WTC11 (cell line): ENCODE measurements at regions of chr17 and their contacts with region 1.

Region 1: GRCh38 chr17:10618202-10618635 is 38.9 kb downstream of the MYH3 start:
- DNase-seq: peak; percentile 80
- ATAC-seq: peak; percentile 91
- H3K4me3 Mint-ChIP-seq: no peak overlapping the region
- H3K27ac Mint-ChIP-seq: no peak overlapping the region
- H3K4me1 Mint-ChIP-seq: peaks cover 14% of the 10 kb centered on the region
- H3K27me3 Mint-ChIP-seq: no peaks in the 10 kb centered on the region
- CTCF ChIP-seq: peak; percentile 78

Region 2: GRCh38 chr17:10309003-10309834 is 309.0 kb before region 1 on chr17:
- CTCF ChIA-PET with region 1: interaction called, 12 read pairs
- POLR2A ChIA-PET with region 1: no interaction called
- DNase-seq: no peak
- ATAC-seq: no peak
- H3K4me3 Mint-ChIP-seq: no peak overlapping the region
- H3K27ac Mint-ChIP-seq: no peak overlapping the region
- H3K4me1 Mint-ChIP-seq: peaks cover 25% of the 10 kb centered on the region
- H3K27me3 Mint-ChIP-seq: peaks cover 8% of the 10 kb centered on the region
- CTCF ChIP-seq: no peak

Region 3: GRCh38 chr17:10337976-10338375 is 280.2 kb before region 1 on chr17:
- CTCF ChIA-PET with region 1: interaction called, 23 read pairs
- POLR2A ChIA-PET with region 1: no interaction called
- DNase-seq: no peak
- ATAC-seq: no peak
- H3K4me3 Mint-ChIP-seq: no peak overlapping the region
- H3K27ac Mint-ChIP-seq: no peak overlapping the region
- H3K4me1 Mint-ChIP-seq: peaks cover 19% of the 10 kb centered on the region
- H3K27me3 Mint-ChIP-seq: no peaks in the 10 kb centered on the region; the same call in 1 of the 2 replicates
- CTCF ChIP-seq: no peak

Region 4: DNA sequence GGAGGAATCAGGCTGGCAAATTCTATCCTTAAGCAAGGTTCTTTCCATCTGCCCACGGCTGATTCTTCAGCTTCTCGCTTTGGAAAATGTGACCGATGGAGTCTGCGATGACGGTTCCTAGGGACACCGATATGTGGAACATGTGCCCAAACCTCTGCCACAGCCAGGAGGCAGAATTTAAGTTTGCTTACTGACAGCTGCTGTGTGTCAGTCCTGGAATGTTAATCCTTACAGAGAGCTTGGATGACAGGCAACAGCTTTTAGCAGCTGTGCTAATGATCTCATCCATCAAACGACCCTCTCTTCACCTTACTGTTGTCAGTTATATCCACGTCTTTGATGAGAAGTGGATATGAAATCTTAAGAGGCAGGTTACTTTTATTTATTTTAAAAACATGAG is 234.0 kb before region 1 on chr17:
- CTCF ChIA-PET with region 1: interaction called, 12 read pairs
- POLR2A ChIA-PET with region 1: no interaction called
- DNase-seq: no peak
- ATAC-seq: no peak
- H3K4me3 Mint-ChIP-seq: no peak overlapping the region
- H3K27ac Mint-ChIP-seq: no peak overlapping the region
- H3K4me1 Mint-ChIP-seq: peaks cover 21% of the 10 kb centered on the region
- H3K27me3 Mint-ChIP-seq: no peaks in the 10 kb centered on the region
- CTCF ChIP-seq: no peak

Region 5: DNA sequence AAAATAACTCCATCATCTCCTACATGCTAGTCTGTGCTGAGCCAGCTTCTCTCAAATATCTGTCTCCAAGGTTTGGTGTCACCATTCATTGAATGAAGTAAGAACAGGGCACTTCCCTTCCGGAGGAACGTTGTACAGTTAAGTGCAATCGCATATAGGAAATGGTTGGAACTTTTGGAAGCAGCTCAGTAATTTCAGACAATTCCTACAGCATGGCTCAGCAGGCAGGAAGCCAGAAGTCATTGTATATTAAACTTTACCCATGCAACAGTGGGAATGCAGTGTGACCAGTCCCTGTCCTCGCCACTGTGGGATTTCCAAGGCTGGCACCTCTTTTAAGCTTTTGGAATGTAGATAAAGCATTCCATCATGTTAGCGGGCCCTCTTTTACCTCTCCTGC is 17.6 kb before region 1 on chr17:
- CTCF ChIA-PET with region 1: interaction called, 12 read pairs
- POLR2A ChIA-PET with region 1: no interaction called
- DNase-seq: no peak
- ATAC-seq: no peak
- H3K4me3 Mint-ChIP-seq: no peak overlapping the region
- H3K27ac Mint-ChIP-seq: no peak overlapping the region
- H3K4me1 Mint-ChIP-seq: 0 out of 2 replicates have a peak, but pooled peaks cover 4% of the 10 kb centered on the region
- H3K27me3 Mint-ChIP-seq: no peaks in the 10 kb centered on the region
- CTCF ChIP-seq: no peak